ENCODE measurements at regions of chr2 and their contacts with region 1.

Region 1: GRCh38 chr2:224885836-224886547 is 156.3 kb downstream of the DOCK10 start:
- DNase-seq: peak; percentile 15
- H3K4me3 Mint-ChIP-seq: no peak overlapping the region
- H3K27ac Mint-ChIP-seq: peak overlapping the region; percentile 82
- H3K4me1 Mint-ChIP-seq: peaks cover 72% of the 10 kb centered on the region
- H3K27me3 Mint-ChIP-seq: no peaks in the 10 kb centered on the region

Region 2: GRCh38 chr2:224594840-224595239 is 291.2 kb before region 1 on chr2:
- CTCF ChIA-PET with region 1: no interaction called
- POLR2A ChIA-PET with region 1: no interaction called
- intact Hi-C with region 1: no loop called
- DNase-seq: no peak
- H3K4me3 Mint-ChIP-seq: no peak overlapping the region
- H3K27ac Mint-ChIP-seq: no peak overlapping the region
- H3K4me1 Mint-ChIP-seq: no peaks in the 10 kb centered on the region
- H3K27me3 Mint-ChIP-seq: peaks cover 4% of the 10 kb centered on the region

Region 3: GRCh38 chr2:224869601-224870233 is 16.3 kb before region 1 on chr2:
- CTCF ChIA-PET with region 1: no interaction called
- POLR2A ChIA-PET with region 1: no interaction called
- intact Hi-C with region 1: no loop called
- DNase-seq: no peak
- H3K4me3 Mint-ChIP-seq: no peak overlapping the region
- H3K27ac Mint-ChIP-seq: no peak overlapping the region
- H3K4me1 Mint-ChIP-seq: peaks cover 8% of the 10 kb centered on the region
- H3K27me3 Mint-ChIP-seq: no peaks in the 10 kb centered on the region

Region 4: GRCh38 chr2:224938651-224939182 is 52.7 kb after region 1 on chr2:
- CTCF ChIA-PET with region 1: interaction called, 4 read pairs
- POLR2A ChIA-PET with region 1: interaction called, 5 read pairs
- intact Hi-C with region 1: loop called (anchors 2 kb)
- DNase-seq: peak; percentile 56
- H3K4me3 Mint-ChIP-seq: peak overlapping the region; percentile 67
- H3K27ac Mint-ChIP-seq: peak overlapping the region; percentile 79
- H3K4me1 Mint-ChIP-seq: peaks cover 80% of the 10 kb centered on the region
- H3K27me3 Mint-ChIP-seq: no peaks in the 10 kb centered on the region

Region 5: GRCh38 chr2:224946895-224947294 is 60.9 kb after region 1 on chr2:
- CTCF ChIA-PET with region 1: interaction called, 4 read pairs
- POLR2A ChIA-PET with region 1: interaction called, 5 read pairs
- intact Hi-C with region 1: loop called (anchors 1 kb)
- DNase-seq: no peak
- H3K4me3 Mint-ChIP-seq: peak overlapping the region; percentile 90
- H3K27ac Mint-ChIP-seq: peak overlapping the region; percentile 95
- H3K4me1 Mint-ChIP-seq: peaks cover 65% of the 10 kb centered on the region
- H3K27me3 Mint-ChIP-seq: no peaks in the 10 kb centered on the region

Region 6: GRCh38 chr2:224973112-224974016 is 87.4 kb after region 1 on chr2:
- CTCF ChIA-PET with region 1: no interaction called
- POLR2A ChIA-PET with region 1: no interaction called
- intact Hi-C with region 1: loop called (anchors 1 kb)
- DNase-seq: peak; percentile 43
- H3K4me3 Mint-ChIP-seq: no peak overlapping the region
- H3K27ac Mint-ChIP-seq: peak overlapping the region; percentile 35
- H3K4me1 Mint-ChIP-seq: peaks cover 76% of the 10 kb centered on the region
- H3K27me3 Mint-ChIP-seq: no peaks in the 10 kb centered on the region

Region 7: GRCh38 chr2:225010804-225011203 is 124.8 kb after region 1 on chr2:
- CTCF ChIA-PET with region 1: no interaction called
- POLR2A ChIA-PET with region 1: no interaction called
- intact Hi-C with region 1: loop called (anchors 1 kb)
- DNase-seq: no peak
- H3K4me3 Mint-ChIP-seq: no peak overlapping the region
- H3K27ac Mint-ChIP-seq: peak overlapping the region; percentile 78
- H3K4me1 Mint-ChIP-seq: peaks cover 93% of the 10 kb centered on the region
- H3K27me3 Mint-ChIP-seq: no peaks in the 10 kb centered on the region